SK-N-SH (cell line): ENCODE measurements at regions of chr6 and their contacts with region 1.

Region 1: GRCh38 chr6:16183187-16183664 is 54.3 kb downstream of the MYLIP start:
- DNase-seq: peak; percentile 60
- H3K4me3 ChIP-seq: no peak overlapping the region
- H3K27ac ChIP-seq: no peak overlapping the region
- H3K4me1 ChIP-seq: no peaks in the 10 kb centered on the region; a peak in 1 of 4 replicates
- H3K27me3 ChIP-seq: no peaks in the 10 kb centered on the region; the same call in 1 of the 2 replicates
- CTCF ChIP-seq: peak; percentile 75
- EP300 ChIP-seq: no peak
- RAD21 ChIP-seq: peak; percentile 84

Region 2: GRCh38 chr6:15685619-15686018 is 497.6 kb before region 1 on chr6:
- CTCF ChIA-PET with region 1: interaction called, 14 read pairs
- POLR2A ChIA-PET with region 1: no interaction called
- DNase-seq: no peak
- H3K4me3 ChIP-seq: no peak overlapping the region
- H3K27ac ChIP-seq: no peak overlapping the region
- H3K4me1 ChIP-seq: no peaks in the 10 kb centered on the region; a peak in 1 of 4 replicates
- H3K27me3 ChIP-seq: no peaks in the 10 kb centered on the region; the same call in 1 of the 2 replicates
- CTCF ChIP-seq: no peak
- EP300 ChIP-seq: no peak
- RAD21 ChIP-seq: no peak

Region 3: DNA sequence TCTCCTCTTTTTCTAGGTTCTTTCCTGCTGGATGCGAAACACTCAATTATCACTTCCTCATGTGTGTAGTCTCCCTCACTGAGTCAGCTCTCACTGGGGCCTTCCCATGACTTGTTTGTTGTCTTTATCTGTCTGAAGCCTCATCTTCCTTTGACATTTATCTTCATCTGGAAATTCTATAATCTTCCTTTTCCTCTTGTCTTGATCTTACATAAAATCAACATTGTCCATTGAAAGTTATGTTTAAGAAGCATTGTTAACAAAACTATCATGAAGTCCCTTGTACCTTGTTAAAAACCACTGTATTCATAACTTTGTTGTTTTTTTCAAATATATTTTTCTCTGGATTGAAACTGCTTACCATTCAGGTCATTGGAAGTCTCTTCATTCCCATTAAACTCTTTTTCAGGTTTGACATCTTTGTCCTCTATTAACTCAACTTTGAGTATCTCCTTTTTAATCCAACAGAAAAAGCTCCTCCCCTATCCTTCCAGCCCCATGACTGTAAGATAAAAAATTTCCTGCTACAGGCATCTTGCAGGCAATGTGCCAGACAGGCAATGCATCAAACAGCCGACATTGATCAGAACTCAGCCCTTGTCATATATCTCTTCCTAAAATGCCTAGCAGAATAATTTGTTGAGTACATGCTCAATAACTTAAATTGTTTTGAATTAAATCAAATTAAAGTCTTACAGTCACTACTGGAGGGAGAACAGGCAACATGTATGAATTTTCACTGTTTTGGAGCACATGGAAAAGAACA is 19.5 kb before region 1 on chr6:
- CTCF ChIA-PET with region 1: interaction called, 15 read pairs
- POLR2A ChIA-PET with region 1: no interaction called
- DNase-seq: no peak
- H3K4me3 ChIP-seq: no peak overlapping the region
- H3K27ac ChIP-seq: no peak overlapping the region
- H3K4me1 ChIP-seq: no peaks in the 10 kb centered on the region; a peak in 2 of 4 replicates
- H3K27me3 ChIP-seq: no peaks in the 10 kb centered on the region
- CTCF ChIP-seq: no peak
- EP300 ChIP-seq: no peak
- RAD21 ChIP-seq: no peak

Region 4: DNA sequence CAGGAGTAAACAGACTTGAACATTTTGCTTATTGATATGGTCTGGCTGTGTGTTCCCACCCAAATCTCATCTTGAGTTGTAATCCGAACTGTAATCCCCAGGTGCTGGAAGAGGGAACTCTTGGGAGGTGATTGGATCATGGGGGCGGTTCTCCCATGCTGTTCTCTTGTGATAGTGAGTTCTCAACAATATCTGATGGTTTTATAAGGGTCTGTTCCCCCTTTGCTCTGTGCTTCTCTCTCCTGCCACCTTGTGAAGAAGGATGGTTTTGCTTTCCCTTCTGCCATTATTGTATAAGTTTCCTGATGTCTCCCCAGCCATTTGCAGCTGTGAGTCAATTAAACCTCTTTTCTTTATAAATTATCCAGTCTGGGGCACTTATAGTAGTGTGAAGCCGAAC is 14.4 kb before region 1 on chr6:
- CTCF ChIA-PET with region 1: interaction called, 15 read pairs
- POLR2A ChIA-PET with region 1: no interaction called
- DNase-seq: no peak
- H3K4me3 ChIP-seq: no peak overlapping the region; a peak in 1 of 4 replicates
- H3K27ac ChIP-seq: no peak overlapping the region
- H3K4me1 ChIP-seq: no peaks in the 10 kb centered on the region; a peak in 1 of 4 replicates
- H3K27me3 ChIP-seq: no peaks in the 10 kb centered on the region
- CTCF ChIP-seq: peak; percentile 57
- EP300 ChIP-seq: no peak
- RAD21 ChIP-seq: peak; percentile 86

Region 5: GRCh38 chr6:16206595-16207037 is 23.4 kb after region 1 on chr6:
- CTCF ChIA-PET with region 1: interaction called, 226 read pairs
- POLR2A ChIA-PET with region 1: no interaction called
- DNase-seq: peak; percentile 80
- H3K4me3 ChIP-seq: peak overlapping the region in 1 of 2 experiments; percentile 33; a peak in 1 of 4 replicates
- H3K27ac ChIP-seq: peak overlapping the region; percentile 36 to 47; a peak in 3 of 4 replicates
- H3K4me1 ChIP-seq: peaks cover 4 to 11% of the 10 kb centered on the region in 2 experiments; a peak in 3 of 4 replicates
- H3K27me3 ChIP-seq: no peaks in the 10 kb centered on the region
- CTCF ChIP-seq: peak; percentile 97
- EP300 ChIP-seq: no peak
- RAD21 ChIP-seq: peak; percentile 98

Region 6: DNA sequence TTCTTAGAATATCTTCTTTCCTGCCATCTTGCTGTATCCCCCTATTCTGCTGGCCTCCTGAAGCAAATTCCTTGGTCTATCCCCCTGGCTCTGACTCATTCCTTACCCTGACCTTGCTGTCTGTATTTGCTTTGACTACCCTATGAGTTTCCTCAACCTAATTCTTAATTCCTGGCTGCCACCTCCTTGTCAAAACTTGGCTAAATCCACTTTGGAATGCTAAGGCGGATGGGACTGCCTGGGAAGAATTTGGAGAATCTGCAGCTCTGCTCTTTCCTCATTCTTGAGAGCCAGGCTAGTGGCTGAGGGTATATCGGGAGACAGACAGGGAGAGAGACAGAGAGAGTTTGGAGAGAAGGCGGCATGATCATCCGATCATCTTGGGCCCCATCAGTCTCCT is 1234.6 kb after region 1 on chr6:
- CTCF ChIA-PET with region 1: no interaction called
- POLR2A ChIA-PET with region 1: no interaction called
- DNase-seq: peak; percentile 16
- H3K4me3 ChIP-seq: 0 out of 4 replicates have a peak overlapping the region, but pooled peaks of 1 of the 2 experiments have one; percentile 23
- H3K27ac ChIP-seq: peak overlapping the region; percentile 72 to 95; a peak in 3 of 4 replicates
- H3K4me1 ChIP-seq: peaks cover 0 to 28% of the 10 kb centered on the region in 2 experiments; a peak in 3 of 4 replicates
- H3K27me3 ChIP-seq: no peaks in the 10 kb centered on the region
- CTCF ChIP-seq: no peak
- EP300 ChIP-seq: no peak
- RAD21 ChIP-seq: no peak